Vagina (tissue), 2 donors: ENCODE measurements at regions of chr9 and their contacts with region 1.

Region 1: DNA sequence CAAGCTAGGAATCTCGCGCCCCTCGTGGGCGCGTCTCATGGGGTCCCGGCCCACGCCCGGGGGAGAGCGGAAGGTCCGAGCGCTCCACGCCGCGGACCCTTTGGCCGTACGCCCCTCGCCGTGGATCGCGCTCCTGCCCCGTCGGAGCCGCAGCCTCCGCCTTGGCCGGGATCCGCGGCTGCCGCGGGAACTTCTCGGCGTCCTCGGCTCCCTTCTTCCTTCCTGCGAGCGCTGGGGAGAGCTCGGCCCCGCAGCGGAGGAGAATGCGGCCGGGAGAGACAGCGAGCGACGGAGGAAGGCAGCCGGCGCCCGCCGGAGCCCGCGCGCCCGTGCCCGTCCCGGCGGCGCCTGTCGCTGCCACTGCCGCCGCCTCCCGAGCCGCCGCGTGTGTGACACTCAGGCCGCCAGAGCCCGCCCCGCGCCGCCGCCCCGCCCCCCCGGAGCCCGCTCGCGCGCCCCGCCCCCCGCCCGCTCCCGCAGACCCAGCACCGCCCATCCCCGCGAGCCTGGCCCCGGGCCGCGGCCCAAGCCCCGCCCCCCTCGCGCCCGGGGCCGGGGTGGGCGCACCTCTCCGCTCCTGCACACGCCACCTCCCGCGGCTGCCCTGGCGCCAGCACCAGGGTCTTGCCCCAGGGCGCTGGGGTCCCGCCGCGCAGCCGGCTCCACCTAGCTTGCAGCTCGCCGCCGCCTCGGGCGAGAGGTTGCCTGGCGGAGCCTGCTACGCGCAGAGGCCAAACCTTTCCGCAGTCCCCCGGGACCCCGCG is at the start of gene SHB:
- DNase-seq: no peak
- H3K4me3 ChIP-seq: peak within 1 kb of the TSS; percentile 91 to 94
- H3K27ac ChIP-seq: peak within 1 kb of the TSS; percentile 87
- H3K4me1 ChIP-seq: peaks cover 47% of the 10 kb centered on the region
- H3K27me3 ChIP-seq: no peaks in the 10 kb centered on the region
- CTCF ChIP-seq: peak in 1 of 3 experiments; percentile 19
- POLR2A ChIP-seq: no peak
- total RNA-seq, gene SHB: 20.9 TPM

Region 2: GRCh38 chr9:37913480-37914153 is 155.4 kb before region 1 on chr9:
- intact Hi-C with region 1: loop called (anchors 5 kb)
- DNase-seq: peak in 1 of 2 donors; percentile 91
- H3K4me3 ChIP-seq: no peak overlapping the region
- H3K27ac ChIP-seq: no peak overlapping the region
- H3K4me1 ChIP-seq: peaks cover 5% of the 10 kb centered on the region
- H3K27me3 ChIP-seq: no peaks in the 10 kb centered on the region
- CTCF ChIP-seq: peak; percentile 91 to 94 (median 91)
- POLR2A ChIP-seq: no peak

Region 3: GRCh38 chr9:37938121-37938891 is 130.7 kb before region 1 on chr9:
- intact Hi-C with region 1: loop called (anchors 5 kb)
- DNase-seq: no peak
- H3K4me3 ChIP-seq: no peak overlapping the region
- H3K27ac ChIP-seq: no peak overlapping the region
- H3K4me1 ChIP-seq: peaks cover 33% of the 10 kb centered on the region
- H3K27me3 ChIP-seq: no peaks in the 10 kb centered on the region
- CTCF ChIP-seq: no peak
- POLR2A ChIP-seq: no peak

Region 4: DNA sequence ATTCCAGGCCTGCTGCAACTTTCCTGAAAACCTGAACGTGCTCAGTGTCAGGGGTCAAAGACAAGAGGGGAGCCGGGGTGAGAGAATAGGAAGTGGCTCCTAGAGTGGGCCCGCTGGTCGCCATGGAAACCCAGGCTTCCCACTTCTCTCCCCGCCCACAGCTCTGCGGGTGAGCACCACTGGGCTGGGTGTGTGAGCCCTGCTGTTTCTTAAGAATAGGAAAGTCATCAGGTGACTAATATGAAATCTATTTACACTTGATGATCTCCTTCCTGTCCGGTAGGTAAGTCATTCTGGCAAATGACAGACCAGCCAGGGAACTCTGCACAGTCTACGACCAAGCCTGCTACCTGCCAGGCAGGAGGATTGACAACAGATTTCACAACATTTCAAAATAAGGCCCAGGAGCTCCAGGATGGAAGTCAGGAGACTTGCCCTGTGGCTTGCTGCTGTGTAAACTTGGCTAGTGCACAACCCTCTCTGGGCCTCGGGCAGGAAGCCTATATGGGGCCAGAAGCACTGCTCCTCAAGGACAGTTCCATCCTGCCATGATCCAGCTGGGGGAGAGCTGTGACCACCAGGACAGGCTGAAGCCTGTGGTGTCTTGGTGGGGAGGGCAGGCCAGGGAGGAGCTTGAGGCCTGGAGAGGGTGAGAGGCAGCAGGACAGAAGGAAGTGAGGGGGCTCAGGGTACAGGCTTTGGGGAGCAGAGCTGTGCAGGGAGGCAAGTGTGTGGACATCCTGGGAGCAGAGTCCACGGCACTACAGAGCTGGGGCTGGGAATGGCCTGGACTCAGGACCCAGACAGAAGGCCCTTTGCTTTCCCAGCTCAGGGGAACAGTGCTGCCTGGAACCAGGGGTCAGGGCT is 60.6 kb before region 1 on chr9:
- intact Hi-C with region 1: no loop called
- DNase-seq: no peak
- H3K4me3 ChIP-seq: no peak overlapping the region
- H3K27ac ChIP-seq: no peak overlapping the region
- H3K4me1 ChIP-seq: peaks cover 43% of the 10 kb centered on the region
- H3K27me3 ChIP-seq: no peaks in the 10 kb centered on the region
- CTCF ChIP-seq: no peak
- POLR2A ChIP-seq: no peak

Region 5: DNA sequence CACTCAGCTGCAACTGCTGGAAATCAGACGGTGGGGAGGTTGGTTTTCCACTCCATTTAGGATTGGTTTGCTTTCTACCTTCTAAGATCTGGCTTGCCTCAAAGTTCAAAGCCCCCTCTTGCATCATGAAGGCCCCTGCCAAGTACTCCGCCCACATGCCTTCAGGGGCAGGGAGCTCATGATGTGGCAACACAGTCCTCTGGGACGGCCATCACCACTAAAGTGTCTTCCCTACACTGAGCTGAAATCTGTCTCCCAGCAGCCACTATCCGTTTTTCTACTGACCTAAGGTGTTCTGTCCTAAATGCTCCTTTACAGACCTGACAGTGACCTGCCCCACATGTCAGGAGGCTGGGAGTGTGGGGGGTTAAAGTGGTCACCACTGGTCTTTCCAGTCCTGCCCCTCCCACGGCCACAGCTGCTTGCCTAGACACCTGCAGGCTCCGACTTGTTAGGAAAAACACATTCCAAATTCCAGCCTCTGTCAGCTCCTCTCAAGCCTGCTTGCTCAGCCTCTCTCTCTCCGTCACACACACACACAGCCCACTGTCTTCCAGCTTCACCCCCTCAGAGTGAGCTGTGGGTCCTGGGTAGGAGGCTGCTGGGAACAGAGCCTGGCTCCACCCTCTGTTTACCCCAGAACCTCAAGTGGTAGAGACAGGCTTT is 44.9 kb before region 1 on chr9:
- intact Hi-C with region 1: loop called (anchors 5 kb)
- DNase-seq: no peak
- H3K4me3 ChIP-seq: no peak overlapping the region
- H3K27ac ChIP-seq: peak overlapping the region; percentile 49
- H3K4me1 ChIP-seq: peaks cover 76% of the 10 kb centered on the region
- H3K27me3 ChIP-seq: no peaks in the 10 kb centered on the region
- CTCF ChIP-seq: no peak
- POLR2A ChIP-seq: no peak